ENCODE measurements at regions of chr2 and their contacts with region 1.

Region 1: DNA sequence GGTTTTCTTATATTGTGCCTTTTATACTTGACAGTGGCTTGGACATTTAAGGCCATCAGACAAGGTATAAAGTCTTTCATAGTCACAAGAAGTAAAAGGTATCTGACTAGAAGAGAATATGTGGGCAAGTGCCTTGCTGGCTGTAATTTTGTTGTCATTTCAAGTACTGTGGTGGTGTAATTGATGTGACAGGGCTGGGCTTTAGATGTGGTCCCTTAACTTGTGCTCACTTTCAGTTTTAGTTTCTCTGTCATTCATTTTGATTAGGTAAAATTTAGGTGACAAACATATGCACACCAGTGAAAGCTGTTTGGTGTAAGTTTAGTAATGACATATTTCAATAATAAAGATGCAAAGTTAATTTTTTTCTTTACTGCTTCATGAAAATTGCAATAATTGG is 31.2 kb upstream of the TBR1 start:
- DNase-seq: no peak
- ATAC-seq: no peak
- H3K4me3 ChIP-seq: no peak overlapping the region
- H3K27ac ChIP-seq: no peak overlapping the region
- H3K4me1 ChIP-seq: no peaks in the 10 kb centered on the region
- H3K27me3 ChIP-seq: no peaks in the 10 kb centered on the region
- CTCF ChIP-seq: no peak

Region 2: GRCh38 chr2:161303535-161304050 is 81.3 kb before region 1 on chr2:
- intact Hi-C with region 1: no loop called
- DNase-seq: no peak
- ATAC-seq: no peak
- H3K4me3 ChIP-seq: no peak overlapping the region
- H3K27ac ChIP-seq: no peak overlapping the region
- H3K4me1 ChIP-seq: no peaks in the 10 kb centered on the region
- H3K27me3 ChIP-seq: no peaks in the 10 kb centered on the region
- CTCF ChIP-seq: no peak

Region 3: DNA sequence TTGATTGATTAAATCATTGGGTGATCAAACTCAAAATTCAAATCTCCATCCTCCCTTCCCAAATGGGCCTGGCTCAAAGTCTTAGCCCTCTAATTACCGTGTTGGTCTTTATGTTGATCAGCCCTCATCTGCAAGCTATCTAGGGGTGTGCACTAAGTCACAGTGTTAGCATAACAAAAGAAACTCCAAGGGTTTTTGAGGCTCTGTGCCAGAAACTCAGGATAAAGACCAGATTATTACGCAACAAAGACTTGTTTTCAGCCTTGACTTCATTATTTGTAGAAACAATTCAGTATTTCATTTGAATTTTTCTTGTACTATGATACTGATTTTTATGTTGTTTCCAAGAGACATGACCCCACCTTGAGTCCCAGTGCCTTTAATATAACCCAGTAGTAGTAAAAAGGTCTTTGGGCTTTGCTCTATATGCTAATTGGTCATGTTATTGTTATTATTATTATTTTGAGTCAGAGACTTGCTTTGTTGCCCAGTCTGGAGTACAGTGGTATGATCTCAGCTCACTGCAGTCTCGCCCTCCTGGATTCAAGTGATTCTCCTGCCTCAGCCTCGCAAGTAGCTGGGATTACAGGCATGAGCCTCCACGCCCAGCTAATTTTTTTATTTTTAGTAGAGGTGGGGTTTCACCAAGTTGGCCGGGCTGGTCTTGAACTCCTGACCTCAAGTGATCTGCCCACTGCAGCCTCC is 62.8 kb before region 1 on chr2:
- intact Hi-C with region 1: loop called in 1 of 2 experiments (anchors 10 kb)
- DNase-seq: no peak
- ATAC-seq: no peak
- H3K4me3 ChIP-seq: no peak overlapping the region
- H3K27ac ChIP-seq: no peak overlapping the region
- H3K4me1 ChIP-seq: no peaks in the 10 kb centered on the region
- H3K27me3 ChIP-seq: no peaks in the 10 kb centered on the region
- CTCF ChIP-seq: no peak

Region 4: GRCh38 chr2:161344692-161345091 is 40.2 kb before region 1 on chr2:
- intact Hi-C with region 1: no loop called
- DNase-seq: no peak
- ATAC-seq: no peak
- H3K4me3 ChIP-seq: no peak overlapping the region
- H3K27ac ChIP-seq: no peak overlapping the region
- H3K4me1 ChIP-seq: peaks cover 11% of the 10 kb centered on the region
- H3K27me3 ChIP-seq: no peaks in the 10 kb centered on the region
- CTCF ChIP-seq: no peak

Region 5: DNA sequence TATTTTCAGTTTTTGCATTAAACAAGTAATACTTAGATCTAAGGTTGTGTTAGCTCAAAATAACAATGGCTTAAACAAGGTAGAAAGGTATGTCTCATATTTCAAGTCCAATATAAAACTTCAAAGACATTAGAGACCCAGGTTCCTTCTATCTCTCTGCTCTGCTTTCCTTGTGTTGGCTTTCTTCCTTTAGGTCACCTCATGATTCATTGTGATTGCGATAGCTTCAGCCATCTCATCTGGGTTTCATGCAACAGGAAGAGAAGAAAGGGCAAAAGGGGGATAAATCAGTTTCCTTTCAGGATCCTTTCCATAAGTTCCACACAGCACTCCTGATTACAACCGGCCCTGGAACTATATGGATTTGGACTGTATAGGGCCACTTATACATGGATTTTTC is 15.2 kb after region 1 on chr2:
- intact Hi-C with region 1: no loop called
- DNase-seq: no peak
- ATAC-seq: no peak
- H3K4me3 ChIP-seq: no peak overlapping the region
- H3K27ac ChIP-seq: no peak overlapping the region
- H3K4me1 ChIP-seq: no peaks in the 10 kb centered on the region
- H3K27me3 ChIP-seq: no peaks in the 10 kb centered on the region
- CTCF ChIP-seq: no peak

Region 6: DNA sequence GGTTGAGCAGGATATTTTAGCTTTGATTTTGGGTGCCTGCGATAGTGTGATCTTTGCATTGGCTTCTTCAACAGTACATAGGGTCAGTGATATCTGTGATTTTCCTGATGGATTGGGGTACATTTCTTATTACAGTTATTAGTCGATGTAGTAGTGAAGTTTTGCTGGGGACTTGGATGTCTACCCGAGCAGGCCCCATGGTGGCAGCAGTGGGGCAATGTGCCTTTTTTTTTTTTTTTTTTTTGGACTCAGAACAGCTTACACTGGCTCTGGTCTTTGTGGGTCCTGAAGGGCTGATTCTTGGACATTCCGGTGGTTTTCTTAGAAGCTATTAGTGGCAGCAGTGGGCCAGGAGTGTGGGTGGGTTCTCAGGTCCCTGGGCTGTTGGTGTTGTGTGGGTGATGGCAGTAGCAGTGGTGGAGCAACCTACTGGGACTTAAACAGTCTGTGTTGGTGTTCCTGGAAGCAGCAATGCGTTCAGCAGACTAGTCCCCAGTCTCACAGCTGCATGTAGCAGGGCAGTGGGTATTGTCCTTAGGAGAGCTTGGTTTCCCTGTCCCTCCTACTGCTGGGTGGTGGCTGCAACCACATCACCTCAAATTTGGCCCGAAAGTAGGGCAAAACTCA is 185.7 kb after region 1 on chr2:
- intact Hi-C with region 1: no loop called
- DNase-seq: no peak
- ATAC-seq: no peak
- H3K4me3 ChIP-seq: no peak overlapping the region
- H3K27ac ChIP-seq: no peak overlapping the region
- H3K4me1 ChIP-seq: no peaks in the 10 kb centered on the region
- H3K27me3 ChIP-seq: peaks cover 0 to 2% (median 0%) of the 10 kb centered on the region in 3 donors
- CTCF ChIP-seq: no peak

Measured in psoas muscle (tissue), 8 donors.